ENCODE measurements at regions of chr22 and their contacts with region 1.

Region 1: DNA sequence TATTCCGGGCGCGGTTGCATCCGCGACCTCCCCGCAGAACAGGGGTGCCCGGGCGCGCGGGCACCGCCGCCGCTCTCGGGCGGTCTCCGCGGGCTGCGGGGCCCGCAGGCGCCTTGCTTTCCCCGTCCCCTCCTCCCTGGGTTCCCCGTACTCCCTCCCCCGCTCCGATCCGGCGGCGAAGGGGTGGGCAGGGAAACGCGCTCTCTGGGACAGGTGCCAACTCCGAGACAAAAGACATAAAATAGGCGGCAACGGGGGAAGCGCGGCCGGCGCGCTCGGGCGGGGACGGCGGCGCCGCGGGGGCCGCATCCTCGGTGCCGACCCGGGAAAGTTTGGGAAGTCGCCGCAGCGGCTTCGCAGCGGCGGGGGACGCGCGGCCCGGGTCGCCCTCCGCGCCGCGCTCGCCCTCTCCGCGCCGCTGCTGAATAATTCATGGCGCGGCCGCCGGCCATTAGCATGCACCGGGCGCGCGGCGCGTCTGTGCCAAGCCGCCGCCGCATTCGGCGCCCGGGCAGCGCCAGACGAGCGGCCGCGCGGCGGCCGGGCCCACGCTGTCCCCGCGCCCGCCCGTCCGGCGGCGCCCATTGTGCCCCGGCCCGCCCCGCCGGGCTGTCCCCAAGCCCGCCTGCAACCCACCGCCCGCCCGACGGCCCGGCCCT is 78.7 kb upstream of the PPARA start:
- DNase-seq: peak; percentile 78 to 92 (median 91)
- H3K4me3 ChIP-seq: peak overlapping the region; percentile 64 to 91 (median 77)
- H3K27ac ChIP-seq: peak overlapping the region; percentile 46 to 78
- H3K4me1 ChIP-seq: peaks cover 3 to 71% (median 36%) of the 10 kb centered on the region in 4 experiments
- H3K27me3 ChIP-seq: peaks cover 0 to 36% (median 0%) of the 10 kb centered on the region in 5 experiments

Region 2: DNA sequence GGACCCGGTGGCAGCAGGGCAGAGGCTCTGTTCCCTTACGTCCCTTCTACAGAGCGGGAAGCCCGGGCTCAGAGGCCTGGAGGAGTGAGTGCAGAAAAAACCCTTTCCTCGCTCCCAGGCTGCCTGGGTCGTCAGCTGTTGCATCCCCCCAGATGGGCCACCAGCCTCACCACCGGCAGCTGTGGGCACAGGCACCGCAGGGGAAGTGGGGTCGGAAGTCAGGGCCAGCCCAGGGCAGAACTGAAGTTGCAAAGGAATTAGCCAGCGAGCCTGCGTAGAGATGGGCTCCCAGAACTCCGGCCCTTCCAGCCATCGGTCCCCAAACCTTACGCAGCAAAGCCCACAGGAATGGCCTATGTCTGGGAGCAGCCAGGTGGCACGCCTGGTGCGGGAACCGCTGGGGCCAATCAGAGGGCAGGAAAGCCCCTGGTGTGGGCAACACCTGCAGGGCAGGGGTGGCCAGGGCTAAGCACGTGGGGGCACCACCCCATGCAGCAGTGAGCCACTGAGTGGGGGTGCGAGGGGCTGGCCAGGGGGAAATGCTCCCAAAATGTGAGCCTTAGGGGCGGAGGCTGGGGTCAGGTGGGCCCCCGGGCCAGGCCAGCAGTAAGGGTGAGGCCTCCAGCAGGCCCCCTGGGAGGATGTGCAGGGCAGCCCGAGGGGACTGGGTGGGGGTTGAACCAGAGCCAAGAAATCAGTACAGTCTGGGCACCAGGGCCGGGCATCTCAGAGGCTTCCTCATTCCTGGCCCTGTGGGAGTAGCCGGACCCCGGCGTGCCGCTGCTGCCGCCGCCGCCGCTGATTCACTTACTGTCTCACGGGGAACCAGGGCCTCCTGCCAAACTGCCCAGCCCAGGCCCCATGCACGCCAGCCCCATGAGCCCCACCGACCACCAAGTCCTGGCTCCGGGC is 152.9 kb before region 1 on chr22:
- CTCF ChIA-PET with region 1: no interaction called
- POLR2A ChIA-PET with region 1: no interaction called
- DNase-seq: peak; percentile 45 to 88 (median 87)
- H3K4me3 ChIP-seq: peak overlapping the region in 1 of 7 experiments; percentile 33
- H3K27ac ChIP-seq: no peak overlapping the region
- H3K4me1 ChIP-seq: peaks cover 0 to 16% (median 13%) of the 10 kb centered on the region in 4 experiments
- H3K27me3 ChIP-seq: peaks cover 0 to 5% (median 0%) of the 10 kb centered on the region in 5 experiments

Region 3: DNA sequence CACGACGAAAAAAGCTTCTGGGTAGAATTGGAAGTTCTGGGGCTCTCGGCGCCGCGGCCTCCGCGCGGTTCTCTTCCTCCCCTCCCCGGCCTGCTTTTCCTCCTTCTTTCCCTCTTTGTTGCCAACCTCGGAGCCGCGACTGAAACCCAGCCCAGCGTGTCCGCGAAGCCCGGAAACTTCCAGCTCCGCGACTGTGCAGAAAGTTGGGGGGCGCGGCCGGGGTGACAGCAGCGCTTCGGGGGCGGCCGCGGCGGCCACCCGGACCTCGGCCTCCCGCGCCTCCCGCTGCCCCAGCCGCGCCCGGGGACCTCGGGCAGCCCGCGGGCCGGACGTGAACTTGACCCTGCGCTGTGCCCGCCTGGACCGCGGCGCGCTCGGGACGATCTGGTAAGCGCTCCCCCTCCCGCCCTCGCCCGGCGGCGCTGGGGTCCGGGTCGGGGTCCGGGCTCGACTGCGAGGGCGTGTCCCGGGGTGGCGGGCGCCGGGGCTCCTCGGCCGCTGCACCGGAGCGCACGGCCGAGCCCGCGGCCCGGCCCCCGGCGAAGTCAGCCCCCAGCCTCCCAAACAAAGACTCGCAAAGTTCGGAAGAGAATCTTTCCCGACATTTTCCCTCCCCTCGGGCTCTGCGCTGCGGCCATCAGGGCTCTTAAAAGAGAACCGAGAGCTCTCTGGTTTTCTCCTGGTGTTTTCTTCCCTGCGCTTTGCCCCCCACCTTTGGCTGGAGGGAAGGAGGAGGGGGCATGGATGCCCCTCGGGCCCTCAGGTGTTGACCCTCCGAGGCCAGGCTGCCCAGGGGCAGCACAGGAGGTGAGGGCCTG is 26.8 kb before region 1 on chr22:
- CTCF ChIA-PET with region 1: interaction called, 8 read pairs
- POLR2A ChIA-PET with region 1: interaction called, 10 read pairs
- DNase-seq: no peak
- H3K4me3 ChIP-seq: peak overlapping the region; percentile 35 to 83 (median 63)
- H3K27ac ChIP-seq: peak overlapping the region; percentile 68 to 76
- H3K4me1 ChIP-seq: peaks cover 0 to 72% (median 25%) of the 10 kb centered on the region in 4 experiments
- H3K27me3 ChIP-seq: peaks cover 0 to 15% (median 0%) of the 10 kb centered on the region in 5 experiments

Region 4: DNA sequence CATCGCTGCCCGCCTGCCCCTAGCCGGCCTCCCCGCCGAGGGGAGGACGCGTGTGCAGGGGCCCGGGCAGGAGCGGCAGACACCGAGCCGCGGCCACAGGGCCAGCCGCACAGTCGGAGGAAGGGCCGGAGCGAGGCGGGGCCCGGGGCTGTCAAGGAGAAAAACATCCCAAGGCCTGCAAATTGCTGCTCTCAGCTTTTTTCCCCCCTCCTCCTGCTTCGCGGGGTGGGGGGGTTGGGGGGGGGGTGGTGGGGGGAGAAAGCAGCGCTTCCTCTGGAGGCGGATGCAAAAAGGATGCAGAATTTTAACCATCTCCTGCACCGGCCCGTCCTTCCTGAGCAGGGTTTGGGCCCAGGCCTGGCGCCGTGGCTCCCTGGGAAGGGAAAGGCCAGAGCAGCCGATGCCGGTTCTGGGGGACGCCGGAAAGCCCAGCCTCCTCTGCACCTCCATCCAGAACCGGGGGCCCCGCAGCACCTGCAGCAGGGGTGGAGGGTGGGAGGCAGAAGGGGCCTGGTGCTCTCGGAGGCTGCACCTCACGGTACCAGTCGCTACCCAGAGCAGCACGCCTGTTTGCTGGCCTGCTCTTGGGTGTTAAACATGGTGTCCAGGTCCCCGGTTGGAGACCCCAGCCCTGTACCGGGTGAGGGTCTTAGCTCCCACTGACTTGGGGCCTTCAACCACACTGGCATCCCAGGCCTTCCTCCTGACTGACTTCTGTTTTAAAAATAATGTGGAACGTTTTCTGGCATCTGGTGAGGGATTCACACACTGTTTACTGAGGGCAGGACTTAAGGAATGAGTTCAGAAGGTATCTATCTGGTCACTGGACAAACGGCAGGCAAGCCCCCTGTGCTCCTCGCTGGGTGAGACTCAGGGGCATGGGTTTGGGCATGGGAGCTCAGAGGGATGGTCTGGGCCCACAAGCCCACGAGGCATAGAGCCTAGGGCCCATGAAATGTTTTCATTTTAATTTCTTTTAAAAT is 17.2 kb before region 1 on chr22:
- CTCF ChIA-PET with region 1: interaction called, 10 read pairs
- POLR2A ChIA-PET with region 1: interaction called, 16 read pairs
- DNase-seq: peak in 1 of 3 donors; percentile 63
- H3K4me3 ChIP-seq: peak overlapping the region; percentile 46 to 79 (median 70)
- H3K27ac ChIP-seq: peak overlapping the region; percentile 66 to 79
- H3K4me1 ChIP-seq: peaks cover 0 to 84% (median 32%) of the 10 kb centered on the region in 4 experiments
- H3K27me3 ChIP-seq: peaks cover 0 to 10% (median 0%) of the 10 kb centered on the region in 5 experiments

Measured in common myeloid progenitor, CD34-positive (primary cell).